Activated CD4-positive, alpha-beta T cell treated with anti-CD3 and anti-CD28 coated beads, Interleukin-2, amount 10 ng/mL, durations not matched to agents 24 days and 14 days (primary cell): ENCODE measurements at regions of chr5 and their contacts with region 1.

Region 1: GRCh38 chr5:78886341-78887230 is 98.5 kb downstream of the ARSB start:
- DNase-seq: no peak
- H3K4me3 Mint-ChIP-seq: no peak overlapping the region
- H3K27ac Mint-ChIP-seq: no peak overlapping the region
- H3K4me1 Mint-ChIP-seq: peaks cover 9% of the 10 kb centered on the region
- H3K27me3 Mint-ChIP-seq: peaks cover 2% of the 10 kb centered on the region

Region 2: DNA sequence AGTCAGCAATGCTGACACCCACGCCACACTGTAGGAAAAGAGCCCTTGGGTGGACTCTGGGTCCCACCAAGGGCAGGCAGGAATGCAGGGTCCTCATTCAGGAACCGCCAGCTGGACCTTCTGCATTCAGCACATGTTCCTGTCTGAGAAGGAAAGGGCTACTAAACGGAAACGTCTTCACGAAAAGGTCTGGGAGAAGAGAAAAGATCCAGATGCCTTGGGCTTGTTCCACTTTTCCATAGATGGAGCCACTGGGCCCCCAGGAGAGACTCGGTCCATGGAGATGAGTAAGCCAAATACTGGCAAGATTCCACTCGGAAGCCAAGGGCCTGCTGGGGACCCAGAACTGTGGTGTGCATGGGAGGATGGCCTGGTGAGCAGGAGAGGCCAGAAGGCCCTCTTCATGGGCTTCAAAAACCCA is 276.4 kb before region 1 on chr5:
- intact Hi-C with region 1: no loop called
- DNase-seq: no peak
- H3K4me3 Mint-ChIP-seq: no peak overlapping the region
- H3K27ac Mint-ChIP-seq: no peak overlapping the region
- H3K4me1 Mint-ChIP-seq: no peaks in the 10 kb centered on the region
- H3K27me3 Mint-ChIP-seq: peaks cover 13% of the 10 kb centered on the region

Region 3: DNA sequence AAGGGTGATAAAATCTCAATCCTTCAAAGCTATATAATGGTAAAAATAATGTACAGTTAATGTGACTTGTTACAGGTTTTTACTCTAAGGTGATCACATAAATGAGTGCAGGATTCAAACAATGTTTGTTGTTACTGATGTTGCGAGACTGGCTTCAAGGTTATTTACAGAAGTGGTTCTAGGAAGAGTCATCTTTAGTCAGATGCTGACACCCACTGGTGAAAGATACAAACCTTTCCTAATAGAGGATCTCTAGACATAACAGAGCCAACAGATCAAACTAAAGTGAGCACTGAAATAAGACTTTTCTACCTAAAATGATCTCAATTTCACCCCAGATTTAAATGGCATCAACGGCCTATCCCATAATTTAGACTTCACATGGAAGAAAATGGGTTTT is 78.3 kb after region 1 on chr5:
- intact Hi-C with region 1: loop called (anchors 5 kb)
- DNase-seq: no peak
- H3K4me3 Mint-ChIP-seq: no peak overlapping the region
- H3K27ac Mint-ChIP-seq: no peak overlapping the region
- H3K4me1 Mint-ChIP-seq: no peaks in the 10 kb centered on the region
- H3K27me3 Mint-ChIP-seq: no peaks in the 10 kb centered on the region